ENCODE measurements at regions of chr1 and their contacts with region 1.

Region 1: GRCh38 chr1:219990782-219991510 is 55.4 kb downstream of the EPRS1 start:
- DNase-seq: peak; percentile 45
- ATAC-seq: peak; percentile 40
- H3K4me3 ChIP-seq: no peak overlapping the region
- H3K27ac ChIP-seq: no peak overlapping the region
- H3K4me1 ChIP-seq: peaks cover 22% of the 10 kb centered on the region
- H3K27me3 ChIP-seq: no peaks in the 10 kb centered on the region
- CTCF ChIP-seq: peak; percentile 32; the same call in 1 of the 2 replicates
- EP300 ChIP-seq: no peak
- POLR2A ChIP-seq: no peak
- RAD21 ChIP-seq: no peak

Region 2: GRCh38 chr1:219876798-219877209 is 114.1 kb before region 1 on chr1:
- CTCF ChIA-PET with region 1: no interaction called
- POLR2A ChIA-PET with region 1: no interaction called
- in situ Hi-C with region 1: no loop called
- intact Hi-C with region 1: loop called (anchors 5 kb)
- DNase-seq: peak; percentile 15
- ATAC-seq: peak; percentile 76
- H3K4me3 ChIP-seq: no peak overlapping the region
- H3K27ac ChIP-seq: no peak overlapping the region
- H3K4me1 ChIP-seq: peaks cover 18% of the 10 kb centered on the region
- H3K27me3 ChIP-seq: no peaks in the 10 kb centered on the region
- CTCF ChIP-seq: peak; percentile 79
- EP300 ChIP-seq: no peak
- POLR2A ChIP-seq: no peak
- RAD21 ChIP-seq: peak; percentile 71

Region 3: GRCh38 chr1:220040028-220040596 is 49.2 kb after region 1 on chr1:
- CTCF ChIA-PET with region 1: no interaction called
- POLR2A ChIA-PET with region 1: no interaction called
- in situ Hi-C with region 1: no loop called
- intact Hi-C with region 1: no loop called
- DNase-seq: no peak
- ATAC-seq: no peak
- H3K4me3 ChIP-seq: no peak overlapping the region
- H3K27ac ChIP-seq: no peak overlapping the region
- H3K4me1 ChIP-seq: peaks cover 20% of the 10 kb centered on the region
- H3K27me3 ChIP-seq: no peaks in the 10 kb centered on the region
- CTCF ChIP-seq: no peak
- EP300 ChIP-seq: no peak
- POLR2A ChIP-seq: no peak
- RAD21 ChIP-seq: no peak

Region 4: DNA sequence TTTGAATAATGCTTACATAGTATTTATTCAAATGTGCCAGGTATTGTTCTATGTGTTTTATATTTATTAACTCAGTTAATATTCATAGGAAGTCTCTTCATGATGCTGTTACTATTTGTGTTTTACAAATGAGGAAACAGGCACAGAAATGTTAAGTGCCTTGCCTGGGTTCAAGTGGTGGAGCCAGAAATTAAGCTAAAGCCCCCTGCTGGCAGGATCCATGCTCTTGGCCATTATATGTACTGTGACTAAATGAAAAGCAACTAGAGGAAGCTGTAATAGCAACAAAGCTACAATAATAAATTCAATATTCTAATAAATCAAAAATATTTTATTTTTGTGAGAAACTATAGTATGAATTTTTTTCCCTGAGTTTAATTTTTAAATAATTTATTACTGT is 132.9 kb after region 1 on chr1:
- CTCF ChIA-PET with region 1: no interaction called
- POLR2A ChIA-PET with region 1: no interaction called
- in situ Hi-C with region 1: no loop called
- intact Hi-C with region 1: loop called (anchors 1 kb)
- DNase-seq: peak; percentile 20
- ATAC-seq: peak; percentile 67
- H3K4me3 ChIP-seq: no peak overlapping the region
- H3K27ac ChIP-seq: no peak overlapping the region
- H3K4me1 ChIP-seq: peaks cover 15% of the 10 kb centered on the region
- H3K27me3 ChIP-seq: no peaks in the 10 kb centered on the region; a peak in 1 of 5 replicates
- CTCF ChIP-seq: peak; percentile 13; the same call in 1 of the 2 replicates
- EP300 ChIP-seq: no peak
- POLR2A ChIP-seq: no peak
- RAD21 ChIP-seq: no peak

Measured in HepG2 (cell line).